Aorta (tissue), 5 donors: ENCODE measurements at regions of chr5 and their contacts with region 1.

Region 1: DNA sequence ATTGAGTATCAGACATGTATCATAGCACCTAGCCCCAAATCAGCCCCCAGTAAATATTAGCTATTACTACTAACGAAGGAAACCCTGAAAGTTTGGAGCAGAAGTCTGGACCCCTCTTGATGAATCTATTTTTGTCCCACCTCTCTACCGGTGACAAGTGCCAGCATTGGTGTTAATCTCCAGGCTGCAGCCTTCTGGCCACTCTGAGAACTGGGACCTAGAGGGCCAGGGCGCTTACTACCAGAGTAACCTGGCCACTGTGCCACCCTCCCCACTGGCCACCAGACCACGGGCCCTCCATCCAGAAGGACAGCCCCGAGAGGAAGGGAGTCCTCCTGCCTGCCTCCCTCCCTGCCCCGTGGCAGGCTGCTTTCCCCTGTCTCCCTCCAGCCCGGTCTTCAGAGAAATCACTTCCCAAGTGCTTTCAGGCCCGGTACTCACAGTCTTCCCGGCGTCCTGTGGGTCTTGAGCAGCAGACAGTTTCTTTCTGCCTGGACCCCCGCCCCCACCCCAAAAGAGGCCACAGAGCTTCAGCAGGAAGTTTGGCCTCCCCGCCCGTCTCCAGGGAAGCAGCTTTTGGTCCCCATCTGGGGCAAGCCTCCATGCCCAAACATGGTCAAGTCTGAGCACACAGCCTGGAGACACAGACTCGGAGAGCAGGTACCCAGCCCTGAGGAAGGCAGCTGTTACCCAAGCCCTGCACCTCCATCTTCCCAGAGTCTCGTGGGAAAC is at the start of gene KCNMB1:
- DNase-seq: peak; percentile 74 to 88
- ATAC-seq: peak; percentile 86
- H3K4me3 ChIP-seq: peak within 1 kb of the TSS; percentile 71 to 80
- H3K27ac ChIP-seq: peak within 1 kb of the TSS; percentile 74 to 97
- H3K4me1 ChIP-seq: no peaks in the 10 kb centered on the region
- H3K27me3 ChIP-seq: no peaks in the 10 kb centered on the region
- total RNA-seq, gene KCNMB1: 30.0 to 63.3 TPM

Region 2: GRCh38 chr5:170306381-170306831 is 82.6 kb before region 1 on chr5:
- intact Hi-C with region 1: loop called in 1 of 2 experiments (anchors 5 kb)
- DNase-seq: peak; percentile 86 to 93
- ATAC-seq: peak; percentile 87
- H3K4me3 ChIP-seq: no peak overlapping the region
- H3K27ac ChIP-seq: peak overlapping the region in 1 of 2 donors; percentile 42
- H3K4me1 ChIP-seq: peaks cover 0 to 3% of the 10 kb centered on the region in 2 donors
- H3K27me3 ChIP-seq: no peaks in the 10 kb centered on the region